Activated CD8-positive, alpha-beta T cell treated with anti-CD3 and anti-CD28 coated beads for 36 hours (primary cell): ENCODE measurements at regions of chr6 and their contacts with region 1.

Region 1: DNA sequence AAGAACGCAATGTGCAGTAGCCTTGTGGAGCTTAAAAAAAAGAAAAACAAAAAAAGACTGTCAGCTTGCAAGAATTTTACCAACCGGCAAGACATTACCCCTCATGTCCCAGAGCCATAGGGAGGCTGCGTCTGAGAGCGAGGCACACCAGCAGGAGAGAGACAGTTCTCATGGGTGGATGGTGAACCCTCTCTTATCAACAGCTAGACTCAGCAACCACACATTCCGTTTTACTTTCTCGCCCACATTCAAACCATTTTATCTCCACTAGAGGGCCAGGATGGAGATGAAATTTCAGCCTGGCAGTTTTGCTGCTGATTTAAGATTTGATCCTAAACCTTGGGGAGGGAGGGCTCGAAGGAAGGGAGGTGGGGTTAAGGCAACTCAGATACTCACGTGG is 247.0 kb downstream of the ATXN1 start:
- DNase-seq: peak; percentile 48
- ATAC-seq: peak; percentile 49
- H3K4me3 Mint-ChIP-seq: no peak overlapping the region
- H3K27ac Mint-ChIP-seq: peak overlapping the region; percentile 8
- H3K4me1 Mint-ChIP-seq: peaks cover 74% of the 10 kb centered on the region
- H3K27me3 Mint-ChIP-seq: no peaks in the 10 kb centered on the region
- CTCF ChIP-seq: peak; percentile 61

Region 2: DNA sequence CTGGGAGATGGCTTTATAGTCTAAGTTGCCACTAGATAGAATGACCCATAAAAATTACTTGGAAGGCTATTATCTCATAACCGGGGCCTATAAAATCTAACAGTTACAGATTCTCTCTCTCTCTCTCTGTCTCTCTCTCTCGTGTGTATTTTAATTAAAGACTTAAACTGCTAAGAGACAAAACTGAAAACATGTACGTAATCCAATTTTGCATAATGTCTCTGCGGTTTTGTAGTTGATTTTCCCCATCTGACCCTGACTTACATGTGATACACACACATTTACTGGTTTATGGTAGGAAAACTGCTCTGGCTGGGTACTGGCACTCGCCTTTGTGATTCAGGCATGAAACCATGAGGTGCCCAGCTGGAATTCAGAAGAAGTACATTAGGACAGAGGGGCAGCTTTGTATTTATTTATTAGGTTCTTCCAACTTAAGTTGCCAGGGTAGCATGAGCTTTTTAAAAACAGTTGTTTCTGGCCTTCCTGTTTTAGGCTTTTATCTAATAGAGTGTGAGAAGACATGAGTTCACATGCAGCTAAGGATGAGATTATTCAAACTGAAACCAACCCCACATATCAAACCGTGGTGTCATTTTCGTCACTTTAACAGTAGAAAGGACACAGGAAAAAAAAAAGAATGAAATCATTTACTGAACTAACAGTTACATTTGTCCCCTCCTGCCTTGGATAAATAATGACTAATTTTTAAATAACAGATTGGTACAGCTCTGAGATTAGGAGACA is 93.4 kb before region 1 on chr6:
- CTCF ChIA-PET with region 1: interaction called, 23 read pairs
- POLR2A ChIA-PET with region 1: interaction called, 4 read pairs
- intact Hi-C with region 1: no loop called
- DNase-seq: peak; percentile 63
- ATAC-seq: peak; percentile 87
- H3K4me3 Mint-ChIP-seq: peak overlapping the region; percentile 25
- H3K27ac Mint-ChIP-seq: peak overlapping the region; percentile 96
- H3K4me1 Mint-ChIP-seq: peaks cover 41% of the 10 kb centered on the region
- H3K27me3 Mint-ChIP-seq: no peaks in the 10 kb centered on the region
- CTCF ChIP-seq: no peak

Region 3: DNA sequence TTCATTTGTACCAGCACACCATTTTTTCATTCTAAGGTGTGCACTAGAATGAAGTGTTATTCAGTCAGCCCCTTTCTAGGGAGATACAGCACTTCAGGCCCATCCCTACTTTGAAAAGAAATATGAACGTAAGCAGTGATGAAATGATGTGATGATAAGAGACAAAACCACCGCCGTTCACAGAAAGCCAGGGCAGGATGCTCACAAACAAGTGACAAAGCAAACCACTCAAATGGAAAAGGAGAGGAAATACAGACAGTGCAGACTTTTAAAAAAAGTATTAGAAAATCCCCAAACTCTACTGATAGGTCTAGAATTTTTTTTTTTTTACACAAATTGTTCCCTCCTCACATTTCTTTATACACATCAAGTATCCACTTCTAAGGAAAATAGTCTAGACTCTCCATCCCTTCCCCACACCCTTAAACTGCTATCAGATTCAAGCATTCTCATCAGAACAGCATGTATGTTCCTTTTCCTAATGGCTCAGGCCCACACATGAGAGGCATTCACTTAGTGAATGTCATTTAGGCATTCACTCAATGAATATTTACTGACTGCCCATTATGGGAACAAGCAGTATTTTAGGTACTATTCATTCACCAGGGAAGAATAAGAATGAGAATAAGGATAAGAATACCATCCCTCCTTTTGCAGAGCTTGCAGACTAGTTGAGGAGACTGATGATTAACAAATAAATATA is 32.4 kb before region 1 on chr6:
- CTCF ChIA-PET with region 1: interaction called, 7 read pairs
- POLR2A ChIA-PET with region 1: interaction called, 10 read pairs
- intact Hi-C with region 1: no loop called
- DNase-seq: peak; percentile 84
- ATAC-seq: peak; percentile 79
- H3K4me3 Mint-ChIP-seq: peak overlapping the region; percentile 6
- H3K27ac Mint-ChIP-seq: peak overlapping the region; percentile 96
- H3K4me1 Mint-ChIP-seq: peaks cover 86% of the 10 kb centered on the region
- H3K27me3 Mint-ChIP-seq: no peaks in the 10 kb centered on the region
- CTCF ChIP-seq: no peak

Region 4: DNA sequence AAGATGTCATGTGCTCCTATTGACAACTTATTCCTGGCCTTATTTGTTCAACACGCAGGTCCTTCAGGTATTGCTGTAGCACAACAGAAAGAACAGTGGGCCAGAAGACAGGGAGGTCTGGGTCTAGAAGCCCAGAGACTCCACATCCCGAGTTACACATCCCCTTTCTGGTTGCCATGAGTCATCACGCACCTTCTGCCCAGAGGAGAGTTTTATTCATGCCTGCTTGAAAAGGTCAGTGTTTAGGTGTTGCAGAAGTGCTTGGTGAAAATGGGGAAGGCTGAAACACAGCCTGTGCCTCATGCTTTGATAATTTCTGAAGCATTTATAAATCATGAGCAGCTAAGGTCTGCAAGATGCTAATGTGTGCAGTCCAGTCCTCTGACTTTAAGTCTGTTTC is 19.5 kb before region 1 on chr6:
- CTCF ChIA-PET with region 1: interaction called, 19 read pairs
- POLR2A ChIA-PET with region 1: no interaction called
- intact Hi-C with region 1: no loop called
- DNase-seq: peak; percentile 55
- ATAC-seq: peak; percentile 76
- H3K4me3 Mint-ChIP-seq: no peak overlapping the region
- H3K27ac Mint-ChIP-seq: no peak overlapping the region
- H3K4me1 Mint-ChIP-seq: peaks cover 62% of the 10 kb centered on the region
- H3K27me3 Mint-ChIP-seq: no peaks in the 10 kb centered on the region
- CTCF ChIP-seq: no peak

Region 5: GRCh38 chr6:16651871-16652270 is 137.6 kb after region 1 on chr6:
- CTCF ChIA-PET with region 1: interaction called, 6 read pairs
- POLR2A ChIA-PET with region 1: no interaction called
- intact Hi-C with region 1: loop called (anchors 10 kb)
- DNase-seq: no peak
- ATAC-seq: peak; percentile 85
- H3K4me3 Mint-ChIP-seq: no peak overlapping the region
- H3K27ac Mint-ChIP-seq: peak overlapping the region; percentile 4
- H3K4me1 Mint-ChIP-seq: peaks cover 50% of the 10 kb centered on the region
- H3K27me3 Mint-ChIP-seq: no peaks in the 10 kb centered on the region
- CTCF ChIP-seq: no peak

Region 6: GRCh38 chr6:16770701-16771569 is 256.7 kb after region 1 on chr6:
- CTCF ChIA-PET with region 1: interaction called, 16 read pairs
- POLR2A ChIA-PET with region 1: no interaction called
- intact Hi-C with region 1: no loop called
- DNase-seq: peak; percentile 80
- ATAC-seq: peak; percentile 69
- H3K4me3 Mint-ChIP-seq: no peak overlapping the region
- H3K27ac Mint-ChIP-seq: no peak overlapping the region
- H3K4me1 Mint-ChIP-seq: peaks cover 52% of the 10 kb centered on the region
- H3K27me3 Mint-ChIP-seq: no peaks in the 10 kb centered on the region
- CTCF ChIP-seq: peak; percentile 96